H1 (cell line): ENCODE measurements at regions of chr3 and their contacts with region 1.

Region 1: DNA sequence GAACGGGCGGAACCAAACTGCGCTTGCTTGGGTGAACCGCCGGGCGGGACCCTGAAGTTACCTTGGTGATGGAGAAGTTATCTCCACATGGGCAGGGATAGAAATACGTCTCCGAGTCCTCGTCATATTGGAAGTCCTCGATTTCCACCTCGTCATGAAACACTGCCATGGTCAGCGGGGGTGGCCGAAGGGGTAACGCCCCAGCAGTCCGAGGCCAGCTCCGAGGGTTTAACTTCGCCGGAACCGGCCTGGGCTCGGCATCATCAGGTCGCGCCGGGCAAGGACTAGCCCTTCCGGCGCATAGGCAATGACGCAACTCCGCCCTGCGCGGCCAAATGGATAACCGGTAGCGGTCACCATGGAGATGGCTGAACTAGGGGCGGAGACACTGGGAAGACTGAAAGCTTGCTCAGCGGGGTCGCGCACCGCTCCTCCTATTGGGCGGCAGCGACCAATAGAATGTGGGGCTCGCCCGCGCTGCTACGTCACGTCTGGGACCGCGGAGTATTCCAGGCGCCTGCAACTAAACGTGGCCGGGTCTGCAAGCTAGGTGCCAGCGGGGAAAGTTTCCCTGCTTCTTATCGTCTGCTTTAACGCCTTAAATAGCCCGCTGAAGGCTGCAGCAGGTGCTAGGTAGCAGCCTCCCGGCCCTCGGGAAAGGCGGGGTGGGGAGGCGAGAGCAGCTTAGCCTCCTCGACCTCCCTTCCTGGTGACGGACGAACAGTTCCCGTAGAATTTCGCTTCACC is at the starts of genes DPH3 and OXNAD1:
- DNase-seq: peak; percentile 96 to 100
- H3K4me3 ChIP-seq: peak within 1 kb of the TSS; percentile 87 to 99 (median 96)
- H3K27ac ChIP-seq: peak within 1 kb of the TSS; percentile 96
- H3K4me1 ChIP-seq: peaks cover 0 to 8% (median 1%) of the 10 kb centered on the region in 4 experiments; a peak in 4 of 7 replicates
- H3K27me3 ChIP-seq: no peaks in the 10 kb centered on the region
- CTCF ChIP-seq: peak in 1 of 3 experiments; percentile 9; a peak in 1 of 4 replicates
- EP300 ChIP-seq: 0 out of 3 replicates have a peak, but pooled peaks of 1 of the 2 experiments have one; percentile 42
- POLR2A ChIP-seq: peak; percentile 92 to 97
- RAD21 ChIP-seq: no peak
- total RNA-seq, gene DPH3: 33.0 and 40.1 TPM in 2 replicates
- total RNA-seq, gene OXNAD1: 24.8 and 25.2 TPM in 2 replicates

Region 2: DNA sequence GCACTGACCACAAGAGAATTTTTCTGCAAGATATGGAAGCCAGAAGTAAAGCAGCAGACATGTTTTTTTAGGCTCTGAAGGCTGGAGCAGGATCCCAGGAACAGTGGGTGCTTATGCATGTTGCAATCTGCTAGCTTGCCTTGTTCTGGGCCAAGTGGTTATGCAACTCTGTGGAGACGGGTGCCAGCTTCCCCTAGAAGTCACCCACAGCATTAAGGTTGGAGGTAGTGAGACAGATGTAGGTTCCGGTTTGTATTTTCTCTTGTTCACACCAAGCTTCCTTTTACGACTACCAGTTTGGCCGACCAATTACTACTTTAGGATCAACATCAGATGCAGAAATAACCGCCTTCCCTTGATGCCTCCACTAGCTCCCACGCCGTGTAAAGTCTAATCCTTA is 11.3 kb before region 1 on chr3:
- CTCF ChIA-PET with region 1: interaction called, 10 read pairs
- POLR2A ChIA-PET with region 1: interaction called, 10 read pairs
- DNase-seq: no peak
- H3K4me3 ChIP-seq: no peak overlapping the region
- H3K27ac ChIP-seq: no peak overlapping the region
- H3K4me1 ChIP-seq: no peaks in the 10 kb centered on the region
- H3K27me3 ChIP-seq: no peaks in the 10 kb centered on the region
- CTCF ChIP-seq: no peak
- EP300 ChIP-seq: no peak
- POLR2A ChIP-seq: no peak
- RAD21 ChIP-seq: no peak